Endothelial cell of umbilical vein (primary cell): ENCODE measurements at regions of chr5 and their contacts with region 1.

Region 1: DNA sequence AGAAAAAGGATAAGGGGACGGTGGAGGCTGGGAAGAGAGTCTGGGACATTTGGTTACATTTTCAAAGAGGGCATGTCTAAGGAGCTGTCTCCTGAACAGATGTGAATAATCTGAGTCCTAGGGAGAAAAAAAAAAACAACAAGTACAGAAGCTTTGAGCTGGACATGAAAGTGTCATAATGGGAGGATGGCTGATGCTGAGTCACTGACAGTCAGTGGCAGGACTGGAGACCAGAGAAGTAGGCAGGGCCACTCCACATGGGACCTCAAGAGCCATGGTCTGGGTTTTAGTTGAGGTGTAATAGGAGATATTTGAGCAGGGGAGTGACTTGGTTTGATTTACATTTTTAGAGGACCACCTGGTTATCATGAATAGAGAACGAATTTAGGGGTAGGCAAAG is 70.6 kb downstream of the DPYSL3 start:
- DNase-seq: no peak
- H3K4me3 ChIP-seq: no peak overlapping the region
- H3K27ac ChIP-seq: no peak overlapping the region
- H3K4me1 ChIP-seq: no peaks in the 10 kb centered on the region
- H3K27me3 ChIP-seq: no peaks in the 10 kb centered on the region
- CTCF ChIP-seq: no peak
- POLR2A ChIP-seq: no peak

Region 2: GRCh38 chr5:147417135-147417813 is 22.0 kb before region 1 on chr5:
- CTCF ChIA-PET with region 1: no interaction called
- POLR2A ChIA-PET with region 1: no interaction called
- dilution Hi-C with region 1: no loop called
- intact Hi-C with region 1: loop called (anchors 2 kb)
- DNase-seq: peak; percentile 82
- H3K4me3 ChIP-seq: no peak overlapping the region
- H3K27ac ChIP-seq: no peak overlapping the region
- H3K4me1 ChIP-seq: no peaks in the 10 kb centered on the region
- H3K27me3 ChIP-seq: no peaks in the 10 kb centered on the region
- CTCF ChIP-seq: no peak
- POLR2A ChIP-seq: no peak